Heart right ventricle (tissue), 16 donors: ENCODE measurements at regions of chr14 and their contacts with region 1.

Region 1: GRCh38 chr14:45916322-45916953 is 663.4 kb upstream of the MIS18BP1 start:
- DNase-seq: no peak
- ATAC-seq: no peak
- H3K4me3 ChIP-seq: no peak overlapping the region
- H3K27ac ChIP-seq: no peak overlapping the region
- H3K4me1 ChIP-seq: no peaks in the 10 kb centered on the region
- H3K27me3 ChIP-seq: no peaks in the 10 kb centered on the region
- CTCF ChIP-seq: no peak

Region 2: DNA sequence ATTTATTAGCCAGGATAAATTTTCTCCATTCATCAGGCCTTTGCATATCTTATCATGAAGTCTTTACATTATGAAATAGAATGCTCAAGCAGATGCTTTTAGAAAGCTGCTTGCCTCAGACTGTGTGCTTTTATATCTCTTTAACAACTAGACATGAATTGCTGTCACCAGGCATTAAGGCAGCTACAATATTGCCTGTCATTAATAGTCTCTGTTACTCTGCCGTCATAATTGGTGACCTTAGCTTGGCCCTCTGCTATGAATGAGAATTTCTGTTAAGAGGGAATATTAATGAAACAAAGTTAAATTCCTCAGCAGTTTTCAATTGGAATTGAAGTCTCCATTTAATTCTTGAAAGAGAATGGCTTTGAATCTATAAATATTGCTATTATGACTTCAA is 396.7 kb before region 1 on chr14:
- intact Hi-C with region 1: loop called in 1 of 10 experiments (anchors 10 kb)
- DNase-seq: no peak
- ATAC-seq: no peak
- H3K4me3 ChIP-seq: no peak overlapping the region
- H3K27ac ChIP-seq: no peak overlapping the region
- H3K4me1 ChIP-seq: no peaks in the 10 kb centered on the region
- H3K27me3 ChIP-seq: no peaks in the 10 kb centered on the region
- CTCF ChIP-seq: no peak

Region 3: GRCh38 chr14:45587142-45587541 is 329.3 kb before region 1 on chr14:
- intact Hi-C with region 1: no loop called
- DNase-seq: no peak
- ATAC-seq: no peak
- H3K4me3 ChIP-seq: no peak overlapping the region
- H3K27ac ChIP-seq: no peak overlapping the region
- H3K4me1 ChIP-seq: no peaks in the 10 kb centered on the region
- H3K27me3 ChIP-seq: no peaks in the 10 kb centered on the region
- CTCF ChIP-seq: no peak